ENCODE measurements at regions of chrX and their contacts with region 1.

Region 1: DNA sequence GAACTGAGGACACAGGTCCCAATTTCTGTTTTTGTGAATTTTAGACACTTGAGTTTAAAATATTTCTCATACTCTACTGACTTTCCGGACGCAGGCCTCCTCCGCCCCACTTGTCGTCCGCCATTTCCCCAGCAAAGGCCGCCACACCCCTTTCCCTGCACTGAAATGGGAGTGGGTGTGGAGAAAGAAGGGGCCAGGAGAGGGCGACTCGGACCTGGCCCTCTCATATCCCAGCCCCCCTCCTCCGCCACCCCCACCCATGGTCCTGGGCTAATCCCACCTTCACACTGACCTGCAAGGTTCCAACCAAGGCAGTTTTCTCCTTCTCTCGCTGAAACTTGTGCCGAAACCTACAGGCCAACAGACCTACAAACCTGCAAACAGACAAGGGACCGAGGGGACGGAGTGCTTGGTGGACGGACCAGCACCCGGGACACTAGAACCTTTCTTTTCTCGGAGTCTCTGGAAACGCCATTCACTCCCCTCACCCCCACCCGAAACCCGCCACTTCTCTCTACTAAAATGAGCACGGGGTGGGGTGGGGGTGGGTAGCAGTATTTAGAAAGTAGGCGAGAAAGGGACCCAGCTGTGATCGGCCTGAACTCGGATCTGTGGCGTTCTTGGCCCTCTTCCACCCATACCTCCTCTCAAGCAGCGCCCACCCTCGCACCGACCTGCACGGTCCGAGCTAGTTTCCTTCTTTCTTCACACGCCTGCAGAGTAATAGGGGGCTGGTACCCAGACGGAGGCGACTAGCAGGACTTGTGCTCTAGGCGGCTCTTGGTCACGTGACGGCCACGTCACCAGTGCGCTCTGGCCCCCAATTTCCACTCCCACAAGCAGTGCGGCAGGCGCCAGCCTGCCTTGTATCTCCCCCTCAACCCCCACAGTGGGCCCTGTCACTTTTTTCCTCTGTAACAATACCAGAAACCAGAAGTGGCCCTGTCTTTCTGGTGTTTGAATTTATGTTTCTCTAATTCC is at the start of gene ARMCX6:
- DNase-seq: peak; percentile 82
- ATAC-seq: peak; percentile 77
- H3K4me3 Mint-ChIP-seq: peak within 1 kb of the TSS; percentile 86
- H3K27ac Mint-ChIP-seq: peak within 1 kb of the TSS; percentile 90
- H3K4me1 Mint-ChIP-seq: peaks cover 41% of the 10 kb centered on the region
- H3K27me3 Mint-ChIP-seq: no peaks in the 10 kb centered on the region
- total RNA-seq, gene ARMCX6: 40.2 to 56.0 TPM

Region 2: GRCh38 chrX:101759000-101759399 is 141.5 kb after region 1 on chrX:
- CTCF ChIA-PET with region 1: no interaction called
- POLR2A ChIA-PET with region 1: no interaction called
- intact Hi-C with region 1: loop called in 1 of 2 experiments (anchors 5 kb)
- DNase-seq: peak; percentile 37
- ATAC-seq: peak; percentile 74
- H3K4me3 Mint-ChIP-seq: no peak overlapping the region
- H3K27ac Mint-ChIP-seq: no peak overlapping the region
- H3K4me1 Mint-ChIP-seq: peaks cover 3% of the 10 kb centered on the region
- H3K27me3 Mint-ChIP-seq: peaks cover 4% of the 10 kb centered on the region

Region 3: DNA sequence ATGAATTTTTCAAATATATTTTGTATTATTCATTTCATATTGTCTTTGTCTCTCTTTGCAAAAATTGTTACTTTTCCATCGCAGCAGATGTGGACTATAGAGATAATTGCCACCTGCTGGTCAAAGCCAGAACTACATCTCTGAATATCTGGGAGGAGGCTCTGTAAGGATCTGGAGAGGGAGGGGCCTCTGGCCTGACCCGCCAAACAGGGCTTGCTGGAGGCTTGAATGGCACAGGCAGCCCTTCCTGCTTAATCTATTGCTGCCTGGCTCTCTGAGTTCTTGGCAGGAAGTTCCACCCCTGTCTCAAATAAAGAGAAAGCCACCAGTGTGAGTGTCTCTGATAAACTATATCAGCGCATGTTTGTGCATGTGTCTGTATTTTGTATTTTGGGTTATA is 181.9 kb after region 1 on chrX:
- CTCF ChIA-PET with region 1: no interaction called
- POLR2A ChIA-PET with region 1: no interaction called
- intact Hi-C with region 1: loop called in 1 of 2 experiments (anchors 5 kb)
- DNase-seq: peak; percentile 85
- ATAC-seq: peak; percentile 100
- H3K4me3 Mint-ChIP-seq: peak overlapping the region; percentile 63
- H3K27ac Mint-ChIP-seq: no peak overlapping the region
- H3K4me1 Mint-ChIP-seq: peaks cover 7% of the 10 kb centered on the region
- H3K27me3 Mint-ChIP-seq: no peaks in the 10 kb centered on the region

Measured in activated CD4-positive, alpha-beta T cell treated with anti-CD3 and anti-CD28 coated beads for 36 hours (primary cell).